ENCODE measurements at regions of chr10 and their contacts with region 1.

Region 1: GRCh38 chr10:42866115-42866995 is 83.8 kb downstream of the BMS1 start:
- DNase-seq: peak; percentile 55 to 84
- H3K4me3 ChIP-seq: no peak overlapping the region
- H3K27ac ChIP-seq: no peak overlapping the region
- H3K4me1 ChIP-seq: no peaks in the 10 kb centered on the region
- H3K27me3 ChIP-seq: peaks cover 12% of the 10 kb centered on the region; the same call in 1 of the 2 replicates
- CTCF ChIP-seq: peak; percentile 83

Region 2: DNA sequence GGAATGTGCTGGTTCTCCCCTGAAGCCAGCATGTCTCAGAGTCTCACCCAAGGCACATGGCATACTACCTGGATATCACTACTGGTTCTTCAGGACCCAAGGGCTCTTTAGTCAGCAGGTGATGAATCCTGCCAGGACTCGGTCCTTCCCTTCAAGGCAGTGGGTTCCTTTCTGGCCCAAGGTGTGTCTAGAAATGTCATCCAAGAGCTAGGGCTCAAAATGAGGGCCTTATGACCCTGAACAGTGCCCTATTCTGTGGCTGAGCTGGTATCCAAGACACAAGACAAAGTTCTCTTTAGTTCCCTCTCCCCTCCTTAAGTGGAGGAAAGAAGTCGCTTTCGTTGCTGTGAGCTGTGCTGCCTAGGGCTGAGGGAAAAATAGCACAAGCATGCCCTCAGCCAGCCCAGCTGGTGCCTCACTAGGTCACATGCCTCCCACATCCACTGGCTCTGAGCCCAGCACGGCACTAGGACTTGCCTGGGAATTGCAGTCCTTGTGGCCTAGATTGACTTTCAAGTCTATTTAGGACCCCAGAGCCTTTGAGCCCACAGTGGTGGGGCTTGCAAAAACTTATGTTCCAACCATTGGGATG is 22.2 kb after region 1 on chr10:
- CTCF ChIA-PET with region 1: no interaction called
- POLR2A ChIA-PET with region 1: no interaction called
- intact Hi-C with region 1: no loop called
- DNase-seq: peak in 1 of 2 experiments; percentile 25
- H3K4me3 ChIP-seq: no peak overlapping the region
- H3K27ac ChIP-seq: no peak overlapping the region
- H3K4me1 ChIP-seq: no peaks in the 10 kb centered on the region
- H3K27me3 ChIP-seq: peaks cover 4% of the 10 kb centered on the region; the same call in 1 of the 2 replicates
- CTCF ChIP-seq: no peak

Region 3: DNA sequence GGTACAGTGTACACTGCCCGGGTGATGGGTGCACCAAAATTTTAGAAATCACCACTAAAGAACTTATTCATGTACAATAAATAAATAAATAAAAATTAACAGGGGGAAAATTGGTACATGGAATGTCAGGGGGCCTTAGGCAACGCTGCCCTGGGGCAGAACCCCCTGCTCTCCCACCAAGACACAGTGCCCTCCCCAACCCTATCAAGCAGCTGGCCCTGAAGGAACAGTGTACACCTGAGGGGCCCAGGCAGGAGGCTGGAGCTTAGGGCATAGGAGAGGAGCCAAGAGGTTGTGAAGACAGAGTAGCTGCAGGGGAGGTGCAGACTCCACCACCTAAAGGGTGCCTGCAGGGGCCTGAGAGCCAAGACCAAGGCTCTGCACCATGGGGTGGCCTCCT is 45.0 kb after region 1 on chr10:
- CTCF ChIA-PET with region 1: no interaction called
- POLR2A ChIA-PET with region 1: no interaction called
- intact Hi-C with region 1: no loop called
- DNase-seq: no peak
- H3K4me3 ChIP-seq: no peak overlapping the region
- H3K27ac ChIP-seq: no peak overlapping the region
- H3K4me1 ChIP-seq: no peaks in the 10 kb centered on the region
- H3K27me3 ChIP-seq: no peaks in the 10 kb centered on the region
- CTCF ChIP-seq: no peak

Region 4: DNA sequence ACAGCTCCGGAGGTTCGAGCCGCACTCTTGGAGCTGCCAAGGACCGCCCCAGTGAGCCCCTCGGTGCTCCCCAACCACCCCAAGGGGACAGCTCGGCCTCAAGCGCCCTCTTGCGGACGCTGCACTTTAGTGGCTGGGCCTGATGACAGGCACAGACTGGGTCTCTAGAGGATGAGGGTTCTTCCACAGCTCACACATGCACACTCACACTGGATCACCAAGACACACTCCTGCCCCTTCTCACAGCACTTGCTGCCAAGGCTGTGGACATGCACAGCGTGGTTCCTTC is 212.6 kb after region 1 on chr10:
- CTCF ChIA-PET with region 1: interaction called, 3 read pairs
- POLR2A ChIA-PET with region 1: no interaction called
- intact Hi-C with region 1: loop called (anchors 1 kb)
- DNase-seq: peak in 1 of 2 experiments; percentile 38
- H3K4me3 ChIP-seq: no peak overlapping the region
- H3K27ac ChIP-seq: no peak overlapping the region
- H3K4me1 ChIP-seq: no peaks in the 10 kb centered on the region
- H3K27me3 ChIP-seq: no peaks in the 10 kb centered on the region
- CTCF ChIP-seq: peak; percentile 69

Region 5: DNA sequence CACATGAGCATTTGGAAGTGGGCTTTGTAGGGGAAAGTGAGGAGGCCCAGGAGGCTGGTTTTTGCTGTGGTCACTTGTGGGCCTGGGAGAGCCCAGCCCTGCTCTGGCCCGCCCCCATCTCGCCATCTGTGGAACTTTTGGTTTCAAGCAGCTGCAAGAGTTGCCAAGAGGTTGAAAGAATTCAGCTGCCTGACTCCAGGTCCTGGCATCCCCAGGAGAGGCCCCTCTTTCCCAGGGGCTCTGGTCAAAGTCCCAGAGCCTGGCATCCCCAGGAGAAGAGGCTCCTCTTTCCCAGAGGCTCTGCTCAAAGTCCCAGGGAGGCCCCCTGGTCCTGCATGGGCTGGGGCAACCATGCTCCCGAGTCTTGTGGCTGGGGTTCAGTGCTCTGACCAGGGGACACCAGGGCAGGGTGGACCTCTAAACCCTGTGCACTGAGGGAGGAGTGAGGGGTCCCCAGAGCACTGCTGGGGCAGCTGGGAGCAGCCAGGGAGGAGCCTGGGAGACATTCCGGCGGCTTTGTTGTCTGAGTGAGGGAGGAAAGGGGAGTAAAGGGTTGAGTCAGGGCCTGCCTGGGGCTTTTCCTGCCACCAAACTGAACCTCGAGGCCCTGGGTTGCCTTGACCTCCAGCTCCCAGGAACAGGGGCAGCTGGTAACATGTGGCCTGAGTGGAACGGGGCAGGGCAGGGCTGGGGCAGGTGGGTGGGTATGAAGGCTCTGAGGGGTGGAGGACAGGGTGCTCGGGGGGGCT is 244.2 kb after region 1 on chr10:
- CTCF ChIA-PET with region 1: interaction called, 11 read pairs
- POLR2A ChIA-PET with region 1: no interaction called
- intact Hi-C with region 1: loop called (anchors 1 kb)
- DNase-seq: no peak
- H3K4me3 ChIP-seq: no peak overlapping the region
- H3K27ac ChIP-seq: no peak overlapping the region
- H3K4me1 ChIP-seq: peaks cover 8% of the 10 kb centered on the region; the same call in 1 of the 2 replicates
- H3K27me3 ChIP-seq: no peaks in the 10 kb centered on the region
- CTCF ChIP-seq: no peak

Region 6: GRCh38 chr10:43255634-43256431 is 389.5 kb after region 1 on chr10:
- CTCF ChIA-PET with region 1: no interaction called
- POLR2A ChIA-PET with region 1: no interaction called
- intact Hi-C with region 1: loop called (anchors 10 kb)
- DNase-seq: no peak
- H3K4me3 ChIP-seq: no peak overlapping the region
- H3K27ac ChIP-seq: no peak overlapping the region
- H3K4me1 ChIP-seq: 0 out of 2 replicates have a peak, but pooled peaks cover 7% of the 10 kb centered on the region
- H3K27me3 ChIP-seq: no peaks in the 10 kb centered on the region
- CTCF ChIP-seq: peak; percentile 70